Naive thymus-derived CD4-positive, alpha-beta T cell (primary cell): ENCODE measurements at regions of chr1 and their contacts with region 1.

Region 1: GRCh38 chr1:88378566-88378965 is 305.5 kb upstream of the PKN2 start:
- DNase-seq: no peak
- ATAC-seq: no peak
- H3K4me3 ChIP-seq: no peak overlapping the region
- H3K4me3 Mint-ChIP-seq: no peak overlapping the region
- H3K27ac ChIP-seq: no peak overlapping the region
- H3K27ac Mint-ChIP-seq: no peak overlapping the region
- H3K4me1 ChIP-seq: no peaks in the 10 kb centered on the region
- H3K4me1 Mint-ChIP-seq: no peaks in the 10 kb centered on the region
- H3K27me3 ChIP-seq: no peaks in the 10 kb centered on the region
- H3K27me3 Mint-ChIP-seq: peaks cover 0 to 9% (median 7%) of the 10 kb centered on the region in 5 donors

Region 2: GRCh38 chr1:88422037-88422436 is 43.5 kb after region 1 on chr1:
- CTCF ChIA-PET with region 1: no interaction called
- POLR2A ChIA-PET with region 1: no interaction called
- intact Hi-C with region 1: loop called in 1 of 2 experiments (anchors 1 kb)
- DNase-seq: no peak
- ATAC-seq: no peak
- H3K4me3 ChIP-seq: no peak overlapping the region
- H3K4me3 Mint-ChIP-seq: no peak overlapping the region
- H3K27ac ChIP-seq: no peak overlapping the region
- H3K27ac Mint-ChIP-seq: no peak overlapping the region
- H3K4me1 ChIP-seq: no peaks in the 10 kb centered on the region
- H3K4me1 Mint-ChIP-seq: no peaks in the 10 kb centered on the region
- H3K27me3 ChIP-seq: no peaks in the 10 kb centered on the region
- H3K27me3 Mint-ChIP-seq: no peaks in the 10 kb centered on the region